Activated CD8-positive, alpha-beta T cell treated with anti-CD3 and anti-CD28 coated beads for 36 hours (primary cell): ENCODE measurements at regions of chr7 and their contacts with region 1.

Region 1: DNA sequence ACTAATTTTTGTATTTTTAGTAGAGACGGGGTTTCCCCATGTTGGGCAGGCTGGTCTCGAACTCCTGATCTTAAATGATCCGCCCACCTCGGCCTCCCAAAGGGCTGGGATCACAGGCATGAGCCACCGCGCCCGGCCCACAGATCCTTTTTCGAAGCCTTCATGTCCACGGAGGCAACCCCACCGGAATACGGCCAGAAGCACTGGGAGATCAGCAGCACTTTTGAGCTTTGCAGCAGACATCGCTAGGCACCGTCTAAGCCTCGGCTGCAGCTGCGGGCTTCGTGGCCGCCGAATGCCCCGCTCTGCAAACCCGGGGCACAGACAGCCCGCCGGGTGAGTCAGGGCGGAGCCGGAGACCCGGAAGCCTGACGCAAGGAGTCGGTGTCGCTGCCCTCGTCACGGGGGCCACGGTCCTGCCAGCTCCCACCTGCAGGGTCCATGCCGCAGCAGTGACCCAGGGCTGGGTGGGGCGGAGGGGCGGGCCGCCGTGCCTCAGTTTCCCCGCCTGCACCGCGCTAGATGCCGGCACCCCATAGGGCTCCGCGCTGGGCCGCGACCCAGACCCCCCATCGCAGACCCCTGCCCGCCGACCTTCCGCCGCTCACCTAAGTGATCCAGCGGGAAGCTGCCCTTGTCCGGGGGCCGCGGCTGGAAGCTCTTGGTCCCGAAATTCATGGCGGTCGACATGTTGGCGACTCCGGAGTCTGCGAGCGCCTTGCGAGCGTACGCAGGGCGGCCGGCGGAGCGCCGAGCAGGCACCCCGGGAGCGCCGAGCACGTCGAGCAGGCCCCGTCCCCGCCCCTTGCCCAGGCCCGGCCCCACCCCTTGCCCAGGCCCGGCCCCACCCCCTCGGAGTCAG is at the start of gene COX19:
- DNase-seq: peak; percentile 91
- ATAC-seq: peak; percentile 92
- H3K4me3 Mint-ChIP-seq: peak within 1 kb of the TSS; percentile 96
- H3K27ac Mint-ChIP-seq: peak within 1 kb of the TSS; percentile 93
- H3K4me1 Mint-ChIP-seq: peaks cover 26% of the 10 kb centered on the region
- H3K27me3 Mint-ChIP-seq: no peaks in the 10 kb centered on the region
- CTCF ChIP-seq: no peak
- total RNA-seq, gene COX19: 15.5 to 18.0 TPM

Region 2: GRCh38 chr7:816300-816750 is 158.7 kb before region 1 on chr7:
- CTCF ChIA-PET with region 1: no interaction called
- POLR2A ChIA-PET with region 1: no interaction called
- intact Hi-C with region 1: no loop called
- DNase-seq: peak; percentile 97
- ATAC-seq: peak; percentile 97
- H3K4me3 Mint-ChIP-seq: peak overlapping the region; percentile 67
- H3K27ac Mint-ChIP-seq: no peak overlapping the region
- H3K4me1 Mint-ChIP-seq: peaks cover 55% of the 10 kb centered on the region
- H3K27me3 Mint-ChIP-seq: peaks cover 15% of the 10 kb centered on the region
- CTCF ChIP-seq: no peak

Region 3: GRCh38 chr7:923108-924041 is 51.7 kb before region 1 on chr7:
- CTCF ChIA-PET with region 1: interaction called, 3 read pairs
- POLR2A ChIA-PET with region 1: interaction called, 12 read pairs
- intact Hi-C with region 1: no loop called
- DNase-seq: peak; percentile 99
- ATAC-seq: peak; percentile 69
- H3K4me3 Mint-ChIP-seq: peak overlapping the region; percentile 77
- H3K27ac Mint-ChIP-seq: peak overlapping the region; percentile 97
- H3K4me1 Mint-ChIP-seq: peaks cover 58% of the 10 kb centered on the region
- H3K27me3 Mint-ChIP-seq: no peaks in the 10 kb centered on the region
- CTCF ChIP-seq: no peak

Region 4: DNA sequence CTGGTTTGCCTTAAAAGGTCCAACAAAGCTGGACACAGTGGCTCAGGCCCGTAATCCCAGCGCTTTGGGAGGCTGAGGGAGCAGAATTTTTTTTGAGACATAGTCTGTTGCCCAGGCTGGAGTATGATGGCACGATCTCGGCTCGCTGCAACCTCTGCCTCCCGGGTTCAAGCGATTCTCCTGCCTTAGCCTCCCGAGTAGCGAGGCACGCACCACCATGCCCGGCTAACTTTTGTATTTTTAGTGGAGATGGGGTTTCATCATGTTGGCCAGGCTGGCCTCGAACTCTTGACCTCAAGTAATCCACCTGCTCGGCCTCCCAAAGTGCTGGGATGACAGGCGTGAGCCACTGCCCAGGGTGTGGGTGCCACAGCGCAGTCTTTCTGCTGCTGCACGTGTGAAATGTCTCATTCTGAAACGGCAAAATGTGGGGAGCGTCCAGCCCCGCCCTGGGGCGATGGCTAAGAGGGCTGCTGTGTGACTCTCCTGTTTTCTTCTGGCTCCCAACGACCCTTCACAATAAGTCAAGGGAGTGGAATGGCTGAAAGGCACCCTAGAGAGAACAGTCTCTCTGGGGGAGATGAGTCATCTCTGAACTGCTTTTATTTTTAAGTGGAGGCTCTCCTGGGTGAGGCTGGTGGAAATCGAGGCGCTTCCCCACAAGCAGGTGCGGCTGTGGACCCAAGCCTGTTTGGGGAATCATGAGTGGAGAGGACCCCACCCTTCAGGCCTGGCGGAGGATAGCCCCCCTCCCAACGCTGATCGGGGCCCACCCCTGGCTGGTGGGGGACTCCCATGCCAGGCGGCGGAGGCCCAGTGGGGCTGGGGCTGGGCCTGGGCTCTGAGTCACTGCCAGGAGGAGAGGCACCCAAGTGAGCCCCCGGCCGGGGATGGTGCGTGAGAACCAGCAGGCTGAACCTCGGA is 38.7 kb before region 1 on chr7:
- CTCF ChIA-PET with region 1: no interaction called
- POLR2A ChIA-PET with region 1: no interaction called
- intact Hi-C with region 1: no loop called
- DNase-seq: peak; percentile 74
- ATAC-seq: peak; percentile 78
- H3K4me3 Mint-ChIP-seq: peak overlapping the region; percentile 27
- H3K27ac Mint-ChIP-seq: peak overlapping the region; percentile 86
- H3K4me1 Mint-ChIP-seq: peaks cover 44% of the 10 kb centered on the region
- H3K27me3 Mint-ChIP-seq: no peaks in the 10 kb centered on the region
- CTCF ChIP-seq: no peak

Region 5: GRCh38 chr7:985915-986741 is 11.1 kb after region 1 on chr7:
- CTCF ChIA-PET with region 1: interaction called, 3 read pairs
- POLR2A ChIA-PET with region 1: interaction called, 19 read pairs
- intact Hi-C with region 1: no loop called
- DNase-seq: no peak
- ATAC-seq: peak; percentile 15
- H3K4me3 Mint-ChIP-seq: no peak overlapping the region
- H3K27ac Mint-ChIP-seq: no peak overlapping the region
- H3K4me1 Mint-ChIP-seq: peaks cover 3% of the 10 kb centered on the region
- H3K27me3 Mint-ChIP-seq: peaks cover 4% of the 10 kb centered on the region
- CTCF ChIP-seq: no peak